CD8-positive, alpha-beta T cell (primary cell): ENCODE measurements at regions of chr3 and their contacts with region 1.

Region 1: DNA sequence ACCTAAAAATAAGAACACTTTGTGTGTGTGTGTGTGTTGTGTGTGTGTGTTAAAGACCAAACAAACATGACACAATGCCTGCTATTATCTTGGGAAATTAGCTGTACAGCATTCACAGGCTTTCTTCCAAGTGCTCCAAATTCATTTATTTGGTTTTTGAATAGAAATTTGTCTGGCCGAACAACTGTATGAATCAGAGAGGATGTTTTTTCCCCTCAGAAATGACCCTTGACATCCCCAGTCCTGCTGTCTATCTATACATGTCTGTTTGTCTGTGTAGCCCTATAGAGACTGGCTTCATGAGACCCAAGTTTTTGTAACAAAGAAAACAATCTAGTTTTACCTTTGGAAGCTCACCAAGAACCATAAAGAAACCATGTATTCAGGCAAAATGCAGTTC is 549.8 kb downstream of the NSUN3 start:
- DNase-seq: no peak
- ATAC-seq: no peak
- H3K4me3 ChIP-seq: no peak overlapping the region
- H3K4me3 Mint-ChIP-seq: no peak overlapping the region
- H3K27ac ChIP-seq: no peak overlapping the region
- H3K27ac Mint-ChIP-seq: no peak overlapping the region
- H3K4me1 ChIP-seq: no peaks in the 10 kb centered on the region
- H3K4me1 Mint-ChIP-seq: no peaks in the 10 kb centered on the region
- H3K27me3 ChIP-seq: no peaks in the 10 kb centered on the region
- H3K27me3 Mint-ChIP-seq: no peaks in the 10 kb centered on the region
- CTCF ChIP-seq: no peak

Region 2: DNA sequence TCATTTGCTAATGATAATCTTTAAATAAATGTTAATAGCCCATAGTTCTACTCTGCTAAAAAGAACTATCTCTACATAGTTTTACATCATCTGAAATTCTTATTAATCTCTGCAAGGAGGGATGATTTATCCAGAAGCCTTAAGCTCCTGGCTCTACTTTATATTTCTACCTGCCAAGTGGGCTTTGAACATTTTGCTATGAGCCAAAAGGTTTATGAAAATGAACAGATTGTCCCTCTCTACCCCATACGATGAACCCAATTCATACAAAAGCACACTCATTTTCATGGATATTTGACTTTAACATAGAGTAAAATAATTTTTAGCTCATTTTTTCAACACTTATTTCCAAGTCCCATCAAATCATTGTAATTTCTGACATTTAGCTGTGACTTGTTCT is 61.2 kb after region 1 on chr3:
- CTCF ChIA-PET with region 1: no interaction called
- POLR2A ChIA-PET with region 1: no interaction called
- intact Hi-C with region 1: loop called in 1 of 2 experiments (anchors 2 kb)
- DNase-seq: no peak
- ATAC-seq: no peak
- H3K4me3 ChIP-seq: no peak overlapping the region
- H3K4me3 Mint-ChIP-seq: no peak overlapping the region
- H3K27ac ChIP-seq: no peak overlapping the region
- H3K27ac Mint-ChIP-seq: no peak overlapping the region
- H3K4me1 ChIP-seq: no peaks in the 10 kb centered on the region
- H3K4me1 Mint-ChIP-seq: no peaks in the 10 kb centered on the region
- H3K27me3 ChIP-seq: no peaks in the 10 kb centered on the region
- H3K27me3 Mint-ChIP-seq: no peaks in the 10 kb centered on the region
- CTCF ChIP-seq: no peak